ENCODE measurements at regions of chr12 and their contacts with region 1.

Region 1: GRCh38 chr12:104358347-104359003 is 54.9 kb downstream of the EID3 start:
- DNase-seq: peak; percentile 58 to 92
- H3K4me3 ChIP-seq: no peak overlapping the region
- CTCF ChIP-seq: peak in 1 of 3 donors; percentile 31
- POLR2A ChIP-seq: no peak

Region 2: GRCh38 chr12:102567031-102567985 is 1791.2 kb before region 1 on chr12:
- intact Hi-C with region 1: no loop called
- DNase-seq: no peak
- H3K4me3 ChIP-seq: no peak overlapping the region
- CTCF ChIP-seq: no peak
- POLR2A ChIP-seq: no peak

Region 3: DNA sequence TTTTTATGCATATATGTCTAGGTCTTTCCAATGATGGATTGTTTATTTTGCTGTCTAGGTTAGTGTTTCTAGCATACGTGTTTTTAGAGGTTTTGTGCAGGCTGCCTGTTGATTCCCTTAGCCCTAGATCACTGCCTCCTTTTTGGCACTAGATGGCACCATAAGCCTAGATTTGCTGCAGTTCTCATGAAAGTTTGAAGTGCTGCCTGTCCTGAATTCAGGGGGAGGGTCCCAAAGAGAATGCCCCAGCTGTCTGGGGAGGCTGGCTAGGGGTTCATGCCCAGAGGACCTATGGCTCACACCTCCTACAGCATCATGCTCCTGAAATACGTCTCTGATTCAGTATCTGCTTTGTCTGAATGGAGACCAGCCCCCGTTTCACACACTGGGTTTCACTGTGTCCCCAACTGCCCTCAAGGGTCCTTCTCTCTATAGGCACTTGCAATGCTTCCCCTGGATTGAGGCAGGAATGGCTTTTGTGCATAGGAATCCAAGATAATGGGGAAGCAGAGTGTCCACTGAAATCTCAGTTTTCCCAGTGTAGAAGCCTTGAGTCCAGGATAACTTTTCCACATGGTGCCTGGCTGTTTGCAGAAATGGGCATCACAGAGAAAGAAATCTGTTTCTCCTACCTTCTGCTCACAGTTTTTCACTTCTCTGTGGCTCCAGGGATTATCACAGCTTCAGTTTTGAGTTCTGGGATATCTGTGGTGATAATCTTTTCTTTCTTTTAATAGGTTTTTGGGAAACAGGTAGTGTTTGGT is 157.1 kb before region 1 on chr12:
- intact Hi-C with region 1: loop called (anchors 2 kb)
- DNase-seq: peak in 1 of 2 donors; percentile 34
- H3K4me3 ChIP-seq: no peak overlapping the region
- CTCF ChIP-seq: peak in 1 of 3 donors; percentile 18
- POLR2A ChIP-seq: no peak

Region 4: GRCh38 chr12:104215638-104216297 is 142.7 kb before region 1 on chr12 and contains the start of gene TXNRD1:
- intact Hi-C with region 1: loop called (anchors 5 kb)
- DNase-seq: peak; percentile 69 to 95
- H3K4me3 ChIP-seq: peak within 1 kb of the TSS; percentile 26
- CTCF ChIP-seq: peak in 1 of 3 donors; percentile 2
- POLR2A ChIP-seq: no peak
- total RNA-seq, gene TXNRD1: 23.4 to 43.2 (median 35.6) TPM

Measured in lower leg skin (tissue), 4 donors.